ENCODE measurements at regions of chr20 and their contacts with region 1.

Region 1: GRCh38 chr20:43857127-43857526 is 57.5 kb upstream of the TOX2 start:
- DNase-seq: no peak
- H3K4me3 ChIP-seq: no peak overlapping the region
- H3K27ac ChIP-seq: no peak overlapping the region
- H3K4me1 ChIP-seq: peaks cover 0 to 2% of the 10 kb centered on the region in 2 experiments; a peak in 2 of 4 replicates
- H3K27me3 ChIP-seq: no peaks in the 10 kb centered on the region
- CTCF ChIP-seq: no peak
- EP300 ChIP-seq: no peak
- RAD21 ChIP-seq: no peak

Region 2: DNA sequence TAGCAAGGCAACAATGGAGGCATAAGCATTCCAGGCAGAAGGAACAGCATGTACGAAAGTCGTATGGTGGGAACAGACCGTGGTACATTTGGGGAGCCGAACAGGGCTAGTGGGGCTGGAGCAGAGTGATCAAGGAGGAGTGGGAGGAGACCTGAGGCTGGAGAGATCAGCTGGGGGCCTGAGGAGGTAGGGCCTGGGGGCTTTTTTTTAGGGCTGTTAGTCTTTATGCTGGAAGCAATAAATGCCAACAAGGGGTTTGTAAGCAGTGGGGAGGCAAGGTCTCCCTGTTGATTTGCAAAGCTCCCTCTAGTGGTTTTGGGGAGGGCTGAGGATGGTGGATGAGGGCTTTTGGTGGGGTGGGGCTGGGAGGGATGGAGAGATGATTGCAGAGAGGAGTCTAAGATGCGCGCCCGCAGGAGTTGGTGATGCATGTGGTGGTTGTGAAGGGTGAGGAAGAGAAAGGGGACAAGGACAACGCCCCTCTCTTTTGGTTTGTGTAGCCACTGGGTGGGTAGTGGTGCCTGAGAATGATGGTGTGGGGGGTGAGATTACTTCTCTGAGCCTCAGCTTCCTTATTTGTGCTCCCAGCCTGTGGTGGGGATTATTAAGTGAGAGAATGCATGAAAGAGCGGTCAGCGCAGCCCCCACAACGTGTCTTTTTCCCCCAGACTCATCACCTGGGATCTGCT is 16.6 kb before region 1 on chr20:
- CTCF ChIA-PET with region 1: interaction called, 10 read pairs
- POLR2A ChIA-PET with region 1: no interaction called
- DNase-seq: peak; percentile 71
- H3K4me3 ChIP-seq: no peak overlapping the region
- H3K27ac ChIP-seq: no peak overlapping the region
- H3K4me1 ChIP-seq: peaks cover 8 to 14% of the 10 kb centered on the region in 2 experiments; a peak in 2 of 4 replicates
- H3K27me3 ChIP-seq: no peaks in the 10 kb centered on the region
- CTCF ChIP-seq: peak; percentile 47
- EP300 ChIP-seq: no peak
- RAD21 ChIP-seq: peak; percentile 44